Activated B cell treated with CpG ODN at 0.5 μM for 24 hours (primary cell): ENCODE measurements at regions of chr5 and their contacts with region 1.

Region 1: GRCh38 chr5:143657647-143658285 is 154.2 kb upstream of the HMHB1 start:
- DNase-seq: no peak
- ATAC-seq: no peak
- H3K4me3 Mint-ChIP-seq: no peak overlapping the region
- H3K27ac Mint-ChIP-seq: no peak overlapping the region
- H3K4me1 Mint-ChIP-seq: no peaks in the 10 kb centered on the region
- H3K27me3 Mint-ChIP-seq: no peaks in the 10 kb centered on the region
- CTCF ChIP-seq: no peak

Region 2: DNA sequence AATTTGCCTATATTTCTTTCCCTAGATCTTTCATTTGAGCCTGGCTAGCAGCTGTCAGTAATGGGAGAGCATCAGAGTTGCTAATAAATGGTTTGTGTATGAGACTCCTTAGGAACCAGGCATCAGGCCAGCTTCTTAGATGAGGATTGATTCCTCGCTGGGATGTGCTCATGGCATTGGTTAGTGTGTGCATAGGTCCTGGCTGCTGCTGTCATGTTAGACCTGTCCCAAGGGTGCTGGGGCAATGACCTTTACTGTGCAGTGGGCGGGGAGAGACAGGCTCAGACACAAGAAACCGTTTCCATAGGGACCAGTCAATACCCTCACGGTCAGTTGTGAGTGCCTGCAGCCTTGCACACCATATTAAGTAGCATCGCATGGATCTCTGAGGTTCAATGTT is 141.9 kb before region 1 on chr5:
- CTCF ChIA-PET with region 1: no interaction called
- POLR2A ChIA-PET with region 1: no interaction called
- intact Hi-C with region 1: no loop called
- DNase-seq: no peak
- ATAC-seq: peak; percentile 56
- H3K4me3 Mint-ChIP-seq: no peak overlapping the region
- H3K27ac Mint-ChIP-seq: no peak overlapping the region
- H3K4me1 Mint-ChIP-seq: peaks cover 15% of the 10 kb centered on the region
- H3K27me3 Mint-ChIP-seq: no peaks in the 10 kb centered on the region
- CTCF ChIP-seq: no peak

Region 3: GRCh38 chr5:143619040-143619622 is 38.6 kb before region 1 on chr5:
- CTCF ChIA-PET with region 1: no interaction called
- POLR2A ChIA-PET with region 1: no interaction called
- intact Hi-C with region 1: loop called (anchors 5 kb)
- DNase-seq: no peak
- ATAC-seq: no peak
- H3K4me3 Mint-ChIP-seq: no peak overlapping the region
- H3K27ac Mint-ChIP-seq: no peak overlapping the region
- H3K4me1 Mint-ChIP-seq: peaks cover 2% of the 10 kb centered on the region
- H3K27me3 Mint-ChIP-seq: peaks cover 2% of the 10 kb centered on the region
- CTCF ChIP-seq: no peak

Region 4: GRCh38 chr5:144060598-144060997 is 402.8 kb after region 1 on chr5:
- CTCF ChIA-PET with region 1: no interaction called
- POLR2A ChIA-PET with region 1: no interaction called
- intact Hi-C with region 1: no loop called
- DNase-seq: no peak
- ATAC-seq: no peak
- H3K4me3 Mint-ChIP-seq: no peak overlapping the region
- H3K27ac Mint-ChIP-seq: no peak overlapping the region
- H3K4me1 Mint-ChIP-seq: no peaks in the 10 kb centered on the region
- H3K27me3 Mint-ChIP-seq: peaks cover 17% of the 10 kb centered on the region
- CTCF ChIP-seq: no peak